PC-3 (cell line): ENCODE measurements at regions of chr19 and their contacts with region 1.

Region 1: DNA sequence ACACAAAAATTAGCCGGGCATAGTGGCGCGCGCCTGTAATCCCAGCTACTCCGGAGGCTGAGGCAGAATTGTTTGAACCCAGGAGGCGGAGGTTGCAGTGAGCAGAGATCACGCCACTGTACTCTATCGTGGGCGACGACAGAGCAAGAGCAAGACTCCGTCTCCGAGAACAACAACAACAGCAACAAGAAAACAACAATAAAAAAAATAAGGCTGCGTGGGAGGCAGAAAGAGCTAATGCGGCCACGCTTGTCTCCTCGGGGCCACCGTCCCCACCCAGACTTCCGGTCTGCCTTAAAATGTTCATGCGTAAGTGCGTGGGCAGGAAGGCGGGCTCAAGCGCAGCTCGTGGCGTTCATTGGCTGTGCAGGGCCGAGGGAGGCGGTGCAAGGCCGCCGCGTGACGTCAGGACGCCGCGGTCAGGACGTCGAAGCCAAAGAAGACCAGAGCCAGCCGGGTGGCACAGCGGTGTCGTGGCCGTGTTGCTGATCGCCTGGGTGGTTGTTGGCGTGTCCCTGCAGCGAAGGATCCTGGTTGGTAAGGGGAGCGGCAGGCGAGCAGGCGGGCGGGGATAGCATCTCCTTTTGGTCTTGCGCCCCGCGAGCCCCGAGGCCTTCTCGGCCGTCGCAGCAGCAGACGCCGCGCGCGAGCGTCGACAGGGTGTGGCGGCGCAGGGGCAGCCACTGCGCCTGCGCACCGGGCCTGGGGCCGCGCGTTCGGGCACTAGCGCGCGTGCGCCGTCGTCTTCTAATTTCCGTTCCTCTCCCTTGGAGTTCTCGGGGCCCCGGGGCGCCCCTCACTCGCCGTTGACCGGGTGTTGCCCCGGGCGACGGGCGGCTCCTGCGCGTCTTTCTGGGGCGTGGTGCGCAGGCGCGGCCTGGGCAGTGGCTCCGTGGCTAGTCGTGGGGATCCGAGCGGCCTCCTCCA is at the start of gene LENG8:
- DNase-seq: peak; percentile 99
- ATAC-seq: peak; percentile 93
- H3K4me3 ChIP-seq: peak within 1 kb of the TSS; percentile 84
- H3K27ac ChIP-seq: peak within 1 kb of the TSS; percentile 82
- H3K4me1 ChIP-seq: peaks cover 27% of the 10 kb centered on the region
- H3K27me3 ChIP-seq: no peaks in the 10 kb centered on the region
- CTCF ChIP-seq: no peak
- total RNA-seq, gene LENG8: 55.5 and 65.8 TPM in 2 replicates

Region 2: GRCh38 chr19:54418030-54418929 is 30.8 kb before region 1 on chr19:
- CTCF ChIA-PET with region 1: no interaction called
- POLR2A ChIA-PET with region 1: no interaction called
- intact Hi-C with region 1: no loop called
- DNase-seq: no peak
- ATAC-seq: no peak
- H3K4me3 ChIP-seq: no peak overlapping the region
- H3K27ac ChIP-seq: no peak overlapping the region
- H3K4me1 ChIP-seq: no peaks in the 10 kb centered on the region
- H3K27me3 ChIP-seq: no peaks in the 10 kb centered on the region
- CTCF ChIP-seq: no peak

Region 3: GRCh38 chr19:54430306-54431254 is 18.5 kb before region 1 on chr19:
- CTCF ChIA-PET with region 1: no interaction called
- POLR2A ChIA-PET with region 1: interaction called, 14 read pairs
- intact Hi-C with region 1: no loop called
- DNase-seq: peak; percentile 74
- ATAC-seq: peak; percentile 55
- H3K4me3 ChIP-seq: peak overlapping the region; percentile 66
- H3K27ac ChIP-seq: peak overlapping the region; percentile 89
- H3K4me1 ChIP-seq: peaks cover 34% of the 10 kb centered on the region
- H3K27me3 ChIP-seq: no peaks in the 10 kb centered on the region
- CTCF ChIP-seq: peak; percentile 53

Region 4: GRCh38 chr19:54463531-54464043 is 14.6 kb after region 1 on chr19 and contains the start of gene LENG9:
- CTCF ChIA-PET with region 1: interaction called, 3 read pairs
- POLR2A ChIA-PET with region 1: interaction called, 9 read pairs
- intact Hi-C with region 1: loop called (anchors 2 kb)
- DNase-seq: peak; percentile 99
- ATAC-seq: peak; percentile 56
- H3K4me3 ChIP-seq: peak within 1 kb of the TSS; percentile 75
- H3K27ac ChIP-seq: peak within 1 kb of the TSS; percentile 87
- H3K4me1 ChIP-seq: peaks cover 16% of the 10 kb centered on the region
- H3K27me3 ChIP-seq: no peaks in the 10 kb centered on the region
- CTCF ChIP-seq: no peak
- total RNA-seq, gene LENG9: 7.1 and 12.6 TPM in 2 replicates